Panc1 (cell line): ENCODE measurements at regions of chr9 and their contacts with region 1.

Region 1: GRCh38 chr9:34744295-34745221 is 34.6 kb upstream of the CCL21 start:
- DNase-seq: no peak
- ATAC-seq: peak; percentile 79
- H3K4me3 ChIP-seq: no peak overlapping the region
- H3K27ac ChIP-seq: no peak overlapping the region
- H3K4me1 ChIP-seq: no peaks in the 10 kb centered on the region
- H3K27me3 ChIP-seq: no peaks in the 10 kb centered on the region
- CTCF ChIP-seq: no peak

Region 2: DNA sequence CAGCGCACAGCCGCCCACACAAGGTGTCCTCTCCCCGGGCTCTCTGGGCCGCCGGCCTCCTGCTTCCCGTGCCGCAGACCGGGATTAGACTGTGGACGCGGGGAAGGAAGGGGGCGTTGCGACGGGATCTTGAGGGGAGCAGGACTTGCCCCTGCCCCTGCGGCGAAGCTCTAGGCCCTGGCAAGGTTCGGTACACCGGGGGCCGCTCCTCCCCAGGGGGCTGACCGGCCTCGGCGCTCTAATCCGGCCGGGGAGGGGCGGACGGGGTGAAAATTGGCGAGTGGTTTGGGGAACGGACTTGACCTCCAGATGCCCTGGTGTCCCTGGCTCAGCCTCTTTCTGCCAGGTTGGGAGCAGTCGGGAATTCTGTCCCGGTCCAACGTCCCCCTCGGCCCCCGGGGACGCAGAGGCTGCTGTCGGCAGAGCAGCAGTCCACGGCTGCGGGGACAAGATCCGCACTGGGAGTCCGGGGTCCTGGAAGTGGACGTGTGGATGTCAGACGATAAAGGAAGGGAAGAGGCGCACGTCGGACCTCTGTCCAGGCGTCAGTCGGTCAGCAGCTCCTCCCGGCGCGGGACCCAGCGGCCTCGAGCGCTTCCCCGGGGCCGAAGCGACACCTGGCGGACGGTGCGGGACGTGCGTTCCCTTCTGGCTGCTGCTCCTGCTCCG is 153.2 kb before region 1 on chr9:
- CTCF ChIA-PET with region 1: no interaction called
- POLR2A ChIA-PET with region 1: no interaction called
- in situ Hi-C with region 1: no loop called
- intact Hi-C with region 1: no loop called
- DNase-seq: peak; percentile 33
- ATAC-seq: peak; percentile 91
- H3K4me3 ChIP-seq: peak overlapping the region in 1 of 2 experiments; percentile 17; a peak in 1 of 4 replicates
- H3K27ac ChIP-seq: no peak overlapping the region
- H3K4me1 ChIP-seq: peaks cover 10% of the 10 kb centered on the region
- H3K27me3 ChIP-seq: peaks cover 6% of the 10 kb centered on the region
- CTCF ChIP-seq: no peak

Region 3: GRCh38 chr9:34777666-34778065 is 33.1 kb after region 1 on chr9:
- CTCF ChIA-PET with region 1: no interaction called
- POLR2A ChIA-PET with region 1: no interaction called
- in situ Hi-C with region 1: no loop called
- intact Hi-C with region 1: no loop called
- DNase-seq: no peak
- ATAC-seq: no peak
- H3K4me3 ChIP-seq: no peak overlapping the region
- H3K27ac ChIP-seq: no peak overlapping the region
- H3K4me1 ChIP-seq: no peaks in the 10 kb centered on the region
- H3K27me3 ChIP-seq: peaks cover 23% of the 10 kb centered on the region
- CTCF ChIP-seq: no peak

Region 4: GRCh38 chr9:35051069-35051967 is 306.8 kb after region 1 on chr9:
- CTCF ChIA-PET with region 1: no interaction called
- POLR2A ChIA-PET with region 1: interaction called, 11 read pairs
- in situ Hi-C with region 1: no loop called
- intact Hi-C with region 1: no loop called
- DNase-seq: peak; percentile 25
- ATAC-seq: peak; percentile 75
- H3K4me3 ChIP-seq: no peak overlapping the region
- H3K27ac ChIP-seq: no peak overlapping the region
- H3K4me1 ChIP-seq: no peaks in the 10 kb centered on the region
- H3K27me3 ChIP-seq: no peaks in the 10 kb centered on the region
- CTCF ChIP-seq: peak; percentile 77